Activated CD4-positive, alpha-beta T cell treated with anti-CD3 and anti-CD28 coated beads, Interleukin-2, amount 10 ng/mL, durations not matched to agents 24 days and 14 days (primary cell): ENCODE measurements at regions of chr4 and their contacts with region 1.

Region 1: DNA sequence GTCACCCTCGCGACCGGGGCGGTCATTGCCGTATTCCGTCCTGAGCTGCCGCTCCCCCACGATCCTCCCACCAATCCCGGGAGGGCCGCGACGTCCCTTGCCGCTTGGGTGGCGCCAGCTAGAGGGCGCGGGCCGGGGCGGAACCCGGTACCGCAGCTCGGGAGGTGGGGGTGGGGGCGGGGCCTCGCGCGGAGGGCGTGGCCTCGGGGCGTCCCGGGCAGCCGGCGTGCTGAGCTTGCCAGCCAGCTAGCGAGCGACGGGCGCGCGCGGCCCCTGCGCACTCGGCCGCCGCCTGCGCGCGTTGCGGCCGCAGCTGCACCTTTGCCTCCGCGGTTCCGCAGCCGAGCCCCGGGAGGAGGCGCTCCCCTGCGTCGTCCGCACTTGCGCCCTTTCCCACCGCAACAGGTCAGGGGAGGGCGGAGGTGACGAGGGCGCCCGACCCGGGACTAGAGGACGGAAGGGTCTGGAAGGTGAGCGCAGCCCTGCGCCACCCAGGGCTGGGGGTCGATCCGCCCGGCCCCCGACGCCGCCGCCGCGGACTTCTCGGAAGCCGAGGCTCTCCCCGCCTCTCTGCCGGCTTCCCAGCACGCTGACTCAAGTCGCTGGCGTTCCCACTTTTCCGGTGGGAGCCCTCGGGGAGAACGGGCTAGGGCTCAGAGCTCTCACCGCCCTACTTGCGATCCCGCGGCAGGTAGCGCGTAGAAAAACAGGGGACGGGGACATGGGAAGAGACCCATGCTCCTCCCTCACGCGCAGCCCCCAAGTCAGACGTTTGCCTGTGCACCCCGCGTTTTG is at the start of gene AFF1:
- DNase-seq: peak; percentile 96
- H3K4me3 Mint-ChIP-seq: peak within 1 kb of the TSS; percentile 94
- H3K27ac Mint-ChIP-seq: peak within 1 kb of the TSS; percentile 98
- H3K4me1 Mint-ChIP-seq: peaks cover 48% of the 10 kb centered on the region
- H3K27me3 Mint-ChIP-seq: no peaks in the 10 kb centered on the region
- total RNA-seq, gene AFF1: 44.0 and 44.3 TPM in 2 replicates

Region 2: GRCh38 chr4:86957214-86957613 is 22.2 kb after region 1 on chr4:
- intact Hi-C with region 1: loop called (anchors 1 kb)
- DNase-seq: no peak
- H3K4me3 Mint-ChIP-seq: no peak overlapping the region
- H3K27ac Mint-ChIP-seq: peak overlapping the region; percentile 45
- H3K4me1 Mint-ChIP-seq: peaks cover 34% of the 10 kb centered on the region
- H3K27me3 Mint-ChIP-seq: no peaks in the 10 kb centered on the region

Region 3: GRCh38 chr4:87006676-87007527 is 71.9 kb after region 1 on chr4:
- intact Hi-C with region 1: loop called (anchors 1 kb)
- DNase-seq: peak; percentile 97
- H3K4me3 Mint-ChIP-seq: peak overlapping the region; percentile 95
- H3K27ac Mint-ChIP-seq: peak overlapping the region; percentile 99
- H3K4me1 Mint-ChIP-seq: peaks cover 50% of the 10 kb centered on the region
- H3K27me3 Mint-ChIP-seq: no peaks in the 10 kb centered on the region

Region 4: GRCh38 chr4:87073199-87074120 is 138.5 kb after region 1 on chr4:
- intact Hi-C with region 1: loop called (anchors 5 kb)
- DNase-seq: peak; percentile 82
- H3K4me3 Mint-ChIP-seq: peak overlapping the region; percentile 83
- H3K27ac Mint-ChIP-seq: peak overlapping the region; percentile 85
- H3K4me1 Mint-ChIP-seq: peaks cover 34% of the 10 kb centered on the region
- H3K27me3 Mint-ChIP-seq: no peaks in the 10 kb centered on the region

Region 5: GRCh38 chr4:87220094-87220822 is 285.3 kb after region 1 on chr4 and contains the start of gene KLHL8:
- intact Hi-C with region 1: loop called (anchors 1 kb)
- DNase-seq: peak; percentile 97
- H3K4me3 Mint-ChIP-seq: peak within 1 kb of the TSS; percentile 89
- H3K27ac Mint-ChIP-seq: peak within 1 kb of the TSS; percentile 95
- H3K4me1 Mint-ChIP-seq: peaks cover 10% of the 10 kb centered on the region
- H3K27me3 Mint-ChIP-seq: peaks cover 9% of the 10 kb centered on the region
- total RNA-seq, gene KLHL8: 16.5 and 17.1 TPM in 2 replicates